Esophagus muscularis mucosa (tissue), 4 donors: ENCODE measurements at regions of chr3 and their contacts with region 1.

Region 1: GRCh38 chr3:120417272-120417911 is 33.4 kb downstream of the FSTL1 start:
- DNase-seq: peak; percentile 98
- H3K4me3 ChIP-seq: peak overlapping the region; percentile 18 to 34 (median 28)
- H3K27ac ChIP-seq: peak overlapping the region; percentile 75 to 87 (median 84)
- H3K4me1 ChIP-seq: peaks cover 50 to 77% (median 73%) of the 10 kb centered on the region in 4 donors
- H3K27me3 ChIP-seq: no peaks in the 10 kb centered on the region
- CTCF ChIP-seq: peak; percentile 89 to 94 (median 90)
- EP300 ChIP-seq: no peak
- POLR2A ChIP-seq: no peak

Region 2: GRCh38 chr3:120245386-120245785 is 172.0 kb before region 1 on chr3:
- intact Hi-C with region 1: loop called (anchors 2 kb)
- DNase-seq: no peak
- H3K4me3 ChIP-seq: no peak overlapping the region
- H3K27ac ChIP-seq: no peak overlapping the region
- H3K4me1 ChIP-seq: no peaks in the 10 kb centered on the region
- H3K27me3 ChIP-seq: no peaks in the 10 kb centered on the region
- CTCF ChIP-seq: no peak
- EP300 ChIP-seq: no peak
- POLR2A ChIP-seq: no peak

Region 3: DNA sequence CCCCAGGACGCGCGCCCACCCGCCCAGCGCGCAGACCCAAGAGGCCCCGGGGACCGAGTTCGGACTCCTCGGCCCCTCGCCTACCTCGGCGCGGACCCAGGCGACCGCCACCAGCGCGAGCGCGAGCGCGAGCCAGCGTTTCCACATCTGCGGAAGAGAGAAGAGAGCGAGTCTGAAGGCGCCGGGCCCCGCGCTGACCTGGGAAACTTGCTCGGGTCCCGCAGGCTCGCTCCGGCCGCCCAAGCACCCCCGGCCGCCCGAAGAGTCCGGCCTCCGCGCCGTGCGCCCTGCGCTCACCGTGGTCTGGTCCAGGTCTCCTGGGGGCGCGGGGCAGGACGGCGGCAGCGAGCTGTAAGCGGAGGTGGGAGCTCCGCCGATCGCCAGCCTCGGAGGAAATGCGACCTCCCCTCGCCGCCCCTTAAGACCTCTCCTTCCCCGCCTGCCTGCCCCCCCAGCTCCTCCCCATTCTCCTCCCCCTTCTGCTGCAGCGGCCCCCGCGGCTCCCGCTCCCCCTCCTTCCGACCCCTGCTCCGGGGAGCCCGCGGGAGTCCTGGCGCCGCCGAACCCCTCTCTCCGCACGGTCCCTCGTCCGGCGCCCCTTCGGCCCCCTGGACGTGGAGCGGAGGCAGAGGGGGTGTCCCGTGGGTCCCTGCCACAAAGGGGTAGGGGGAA is 33.3 kb after region 1 on chr3 and contains the start of gene FSTL1:
- intact Hi-C with region 1: loop called (anchors 2 kb)
- DNase-seq: no peak
- H3K4me3 ChIP-seq: peak within 1 kb of the TSS; percentile 67 to 98 (median 91)
- H3K27ac ChIP-seq: peak within 1 kb of the TSS; percentile 93 to 100 (median 97)
- H3K4me1 ChIP-seq: peaks cover 41 to 48% (median 46%) of the 10 kb centered on the region in 4 donors
- H3K27me3 ChIP-seq: no peaks in the 10 kb centered on the region
- CTCF ChIP-seq: peak in 1 of 3 experiments; percentile 2
- EP300 ChIP-seq: no peak
- POLR2A ChIP-seq: peak; percentile 43
- total RNA-seq, gene FSTL1: 409 to 701 (median 677) TPM

Region 4: GRCh38 chr3:120498556-120499346 is 81.4 kb after region 1 on chr3:
- intact Hi-C with region 1: loop called (anchors 5 kb)
- DNase-seq: peak; percentile 87
- H3K4me3 ChIP-seq: no peak overlapping the region
- H3K27ac ChIP-seq: peak overlapping the region; percentile 58 to 81 (median 72)
- H3K4me1 ChIP-seq: peaks cover 9 to 38% (median 35%) of the 10 kb centered on the region in 4 donors
- H3K27me3 ChIP-seq: no peaks in the 10 kb centered on the region
- CTCF ChIP-seq: no peak
- EP300 ChIP-seq: no peak
- POLR2A ChIP-seq: no peak

Region 5: DNA sequence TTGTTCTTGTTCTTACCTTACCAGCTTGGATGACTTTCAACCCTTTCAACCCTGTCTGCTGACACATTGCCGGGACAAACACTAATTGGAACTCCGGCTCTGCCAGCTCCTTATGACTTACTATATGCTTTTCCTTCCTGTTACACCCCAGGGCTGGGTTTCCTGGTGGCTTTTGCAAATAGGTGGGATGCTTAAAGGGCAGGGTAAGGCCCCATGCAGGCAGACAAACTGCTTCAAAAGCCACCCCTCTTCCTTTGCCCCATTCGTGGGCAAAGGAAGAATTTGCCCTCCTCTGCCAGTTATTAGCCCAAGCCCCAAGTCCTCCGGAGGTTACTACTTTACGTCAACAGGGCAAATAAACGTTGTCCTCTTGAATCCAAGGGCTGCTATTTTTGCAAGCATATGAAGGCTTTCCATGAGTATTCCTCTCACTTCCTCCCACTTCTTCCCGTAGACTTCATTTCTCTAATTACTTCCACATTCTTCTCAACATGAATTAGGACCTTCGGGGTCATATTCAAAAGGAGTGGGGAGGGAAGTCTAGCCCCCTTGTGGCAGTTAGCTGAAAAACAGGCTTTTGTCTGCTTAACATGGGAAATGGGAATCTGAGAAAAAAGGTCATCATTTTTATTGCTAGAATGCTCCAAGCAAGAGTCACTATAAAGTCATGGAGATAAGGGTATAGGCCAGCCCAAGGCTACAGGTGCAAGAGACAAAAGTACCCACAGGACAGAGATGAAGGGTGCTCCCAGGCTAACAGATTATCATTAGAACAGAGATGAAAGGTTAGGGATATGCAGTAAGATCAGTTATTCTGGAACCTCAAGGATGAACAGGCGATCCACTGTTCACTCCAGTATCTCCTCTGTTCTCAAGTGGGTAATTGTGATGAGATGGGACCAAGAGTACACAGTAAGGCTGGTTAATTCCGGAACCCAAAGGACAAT is 89.7 kb after region 1 on chr3:
- intact Hi-C with region 1: loop called (anchors 5 kb)
- DNase-seq: peak; percentile 91
- H3K4me3 ChIP-seq: peak overlapping the region in 2 of 4 donors; percentile 4 to 21
- H3K27ac ChIP-seq: peak overlapping the region in 3 of 4 donors; percentile 25 to 44 (median 40)
- H3K4me1 ChIP-seq: peaks cover 16 to 27% (median 21%) of the 10 kb centered on the region in 4 donors
- H3K27me3 ChIP-seq: no peaks in the 10 kb centered on the region
- CTCF ChIP-seq: peak; percentile 58 to 71 (median 65)
- EP300 ChIP-seq: no peak
- POLR2A ChIP-seq: no peak

Region 6: GRCh38 chr3:120567370-120568201 is 150.2 kb after region 1 on chr3:
- intact Hi-C with region 1: no loop called
- DNase-seq: peak; percentile 53
- H3K4me3 ChIP-seq: peak overlapping the region; percentile 6 to 36 (median 30)
- H3K27ac ChIP-seq: peak overlapping the region; percentile 6 to 68 (median 34)
- H3K4me1 ChIP-seq: peaks cover 4 to 33% (median 17%) of the 10 kb centered on the region in 4 donors
- H3K27me3 ChIP-seq: no peaks in the 10 kb centered on the region
- CTCF ChIP-seq: peak; percentile 50 to 54 (median 53)
- EP300 ChIP-seq: no peak
- POLR2A ChIP-seq: no peak

Region 7: DNA sequence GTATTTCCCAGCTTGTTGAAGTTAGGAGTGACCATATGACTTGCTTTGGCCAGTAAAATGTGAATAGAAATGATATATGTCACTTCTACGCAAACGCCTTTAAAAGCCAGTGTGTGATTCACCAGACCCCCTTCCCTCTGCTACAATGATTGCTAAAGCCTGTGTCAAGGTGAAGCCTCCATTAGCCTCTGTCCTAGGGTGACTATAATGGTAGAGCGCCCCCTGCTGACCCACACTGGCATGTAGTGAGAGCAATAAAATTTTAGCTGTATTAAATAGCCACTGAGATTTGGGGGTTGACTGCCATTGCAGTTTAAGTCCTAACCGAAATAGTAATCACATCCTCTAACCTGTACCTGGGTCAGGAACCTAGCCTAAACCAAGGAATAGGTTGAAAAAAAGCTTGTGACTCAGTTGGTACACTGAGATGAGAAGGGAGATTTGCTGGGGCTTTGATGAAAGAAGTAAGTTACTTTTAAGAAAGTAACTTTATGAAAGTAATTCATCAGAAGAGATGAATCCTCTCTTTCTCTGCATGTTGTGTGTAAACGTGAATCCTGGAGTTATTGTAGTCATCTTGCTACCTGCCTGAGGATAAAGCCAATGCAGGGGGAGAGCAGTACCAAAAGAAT is 377.7 kb after region 1 on chr3:
- intact Hi-C with region 1: loop called (anchors 10 kb)
- DNase-seq: peak; percentile 95
- H3K4me3 ChIP-seq: no peak overlapping the region
- H3K27ac ChIP-seq: no peak overlapping the region
- H3K4me1 ChIP-seq: no peaks in the 10 kb centered on the region
- H3K27me3 ChIP-seq: no peaks in the 10 kb centered on the region
- CTCF ChIP-seq: peak; percentile 78 to 88 (median 82)
- EP300 ChIP-seq: no peak
- POLR2A ChIP-seq: no peak